Activated CD4-positive, alpha-beta memory T cell treated with anti-CD3 and anti-CD28 coated beads for 36 hours (primary cell): ENCODE measurements at regions of chr1 and their contacts with region 1.

Region 1: GRCh38 chr1:235917267-235917811 is 50.6 kb upstream of the LYST start:
- DNase-seq: peak; percentile 86
- H3K4me3 Mint-ChIP-seq: no peak overlapping the region
- H3K27ac Mint-ChIP-seq: peak overlapping the region; percentile 66
- H3K4me1 Mint-ChIP-seq: peaks cover 34% of the 10 kb centered on the region
- H3K27me3 Mint-ChIP-seq: no peaks in the 10 kb centered on the region

Region 2: GRCh38 chr1:235866913-235867845 is 50.2 kb before region 1 on chr1:
- CTCF ChIA-PET with region 1: interaction called, 11 read pairs
- POLR2A ChIA-PET with region 1: interaction called, 4 read pairs
- intact Hi-C with region 1: loop called (anchors 1 kb)
- DNase-seq: peak; percentile 98
- H3K4me3 Mint-ChIP-seq: peak overlapping the region; percentile 89
- H3K27ac Mint-ChIP-seq: peak overlapping the region; percentile 98
- H3K4me1 Mint-ChIP-seq: peaks cover 45% of the 10 kb centered on the region
- H3K27me3 Mint-ChIP-seq: no peaks in the 10 kb centered on the region